ENCODE measurements at regions of chr7 and their contacts with region 1.

Region 1: DNA sequence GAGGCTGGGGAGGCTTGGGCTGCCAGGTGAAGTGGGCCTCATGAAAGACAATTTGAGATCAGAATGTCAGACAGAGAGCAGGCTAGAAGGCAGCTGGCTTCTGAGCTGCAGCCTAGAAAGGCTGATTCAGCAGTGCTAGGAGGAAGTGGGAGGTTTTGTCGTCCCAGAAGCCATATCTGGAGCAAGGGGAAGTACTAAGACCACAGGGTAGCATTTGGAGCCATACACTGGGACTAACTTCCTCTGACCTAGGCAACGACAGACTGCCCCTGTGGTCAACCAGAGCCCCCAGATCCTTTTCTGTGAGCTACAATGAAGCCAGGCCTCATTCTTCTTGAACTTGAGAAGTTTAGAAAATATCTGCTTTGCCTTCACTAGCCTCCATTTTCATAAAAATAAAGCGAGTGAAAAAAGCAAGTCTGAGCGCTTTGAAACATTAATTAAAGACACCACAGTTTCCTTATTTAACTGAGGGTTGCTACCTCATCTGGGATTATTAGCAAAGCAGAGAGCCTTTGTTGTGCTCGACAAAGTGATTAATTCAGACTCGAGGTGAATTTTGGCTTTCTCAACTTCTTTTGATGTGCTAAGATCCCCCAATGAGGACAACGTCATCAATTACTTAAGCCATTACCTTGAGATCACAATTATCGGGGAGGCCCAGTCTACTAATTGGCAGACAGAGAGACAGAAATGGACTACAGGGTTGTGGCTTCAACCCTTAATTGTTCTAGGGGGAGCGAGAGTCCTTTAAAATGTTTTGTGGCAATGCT is 26.6 kb downstream of the TBXAS1 start:
- DNase-seq: peak; percentile 84 to 96 (median 94)
- H3K4me3 ChIP-seq: peak overlapping the region in 1 of 3 experiments; percentile 56
- H3K4me3 Mint-ChIP-seq: peak overlapping the region in 1 of 2 donors; percentile 83
- H3K27ac ChIP-seq: peak overlapping the region; percentile 91 to 95
- H3K27ac Mint-ChIP-seq: peak overlapping the region; percentile 95 to 100 (median 99)
- H3K4me1 ChIP-seq: peaks cover 87 to 89% of the 10 kb centered on the region in 2 donors
- H3K4me1 Mint-ChIP-seq: peaks cover 80% of the 10 kb centered on the region
- H3K27me3 ChIP-seq: no peaks in the 10 kb centered on the region
- H3K27me3 Mint-ChIP-seq: peaks cover 0 to 4% (median 0%) of the 10 kb centered on the region in 3 donors
- CTCF ChIP-seq: no peak

Region 2: DNA sequence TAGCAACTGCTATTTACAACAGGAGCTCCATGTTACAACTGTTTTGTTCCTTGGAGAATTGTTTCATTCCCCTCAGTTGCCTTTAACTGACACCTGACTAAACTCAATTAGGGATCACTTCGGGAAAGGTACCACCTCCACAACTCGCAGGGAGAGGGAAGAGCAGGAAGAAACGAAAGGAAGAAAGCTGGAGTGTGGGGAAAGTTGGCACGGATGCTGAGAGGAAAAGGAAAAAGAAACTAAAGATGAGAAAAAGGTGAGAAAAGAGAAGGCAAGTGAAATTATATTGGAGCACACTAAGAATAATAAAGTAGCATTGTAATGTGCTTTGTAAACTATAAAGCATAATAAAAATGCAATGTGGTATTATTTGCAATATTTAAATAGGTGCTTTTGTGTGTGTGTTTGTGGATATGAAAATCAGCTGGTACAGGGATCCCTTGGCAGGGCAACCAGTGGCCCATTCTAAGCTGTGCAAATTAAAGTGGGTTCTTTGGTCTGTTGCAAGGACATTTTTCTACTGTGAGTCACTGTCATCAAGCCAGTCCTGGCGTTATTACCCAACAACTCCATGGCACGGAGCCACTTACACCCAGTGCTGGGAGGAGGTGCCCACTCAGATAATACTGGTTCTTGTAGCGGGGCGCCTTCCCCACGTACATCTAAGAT is 123.7 kb before region 1 on chr7:
- intact Hi-C with region 1: no loop called
- DNase-seq: peak; percentile 93 to 97 (median 94)
- H3K4me3 ChIP-seq: peak overlapping the region in 1 of 3 experiments; percentile 38
- H3K4me3 Mint-ChIP-seq: peak overlapping the region; percentile 63 to 72
- H3K27ac ChIP-seq: peak overlapping the region; percentile 88 to 93
- H3K27ac Mint-ChIP-seq: peak overlapping the region; percentile 89 to 100 (median 99)
- H3K4me1 ChIP-seq: peaks cover 64 to 81% of the 10 kb centered on the region in 2 donors
- H3K4me1 Mint-ChIP-seq: peaks cover 81% of the 10 kb centered on the region
- H3K27me3 ChIP-seq: no peaks in the 10 kb centered on the region
- H3K27me3 Mint-ChIP-seq: peaks cover 0 to 3% (median 0%) of the 10 kb centered on the region in 3 donors
- CTCF ChIP-seq: no peak

Region 3: DNA sequence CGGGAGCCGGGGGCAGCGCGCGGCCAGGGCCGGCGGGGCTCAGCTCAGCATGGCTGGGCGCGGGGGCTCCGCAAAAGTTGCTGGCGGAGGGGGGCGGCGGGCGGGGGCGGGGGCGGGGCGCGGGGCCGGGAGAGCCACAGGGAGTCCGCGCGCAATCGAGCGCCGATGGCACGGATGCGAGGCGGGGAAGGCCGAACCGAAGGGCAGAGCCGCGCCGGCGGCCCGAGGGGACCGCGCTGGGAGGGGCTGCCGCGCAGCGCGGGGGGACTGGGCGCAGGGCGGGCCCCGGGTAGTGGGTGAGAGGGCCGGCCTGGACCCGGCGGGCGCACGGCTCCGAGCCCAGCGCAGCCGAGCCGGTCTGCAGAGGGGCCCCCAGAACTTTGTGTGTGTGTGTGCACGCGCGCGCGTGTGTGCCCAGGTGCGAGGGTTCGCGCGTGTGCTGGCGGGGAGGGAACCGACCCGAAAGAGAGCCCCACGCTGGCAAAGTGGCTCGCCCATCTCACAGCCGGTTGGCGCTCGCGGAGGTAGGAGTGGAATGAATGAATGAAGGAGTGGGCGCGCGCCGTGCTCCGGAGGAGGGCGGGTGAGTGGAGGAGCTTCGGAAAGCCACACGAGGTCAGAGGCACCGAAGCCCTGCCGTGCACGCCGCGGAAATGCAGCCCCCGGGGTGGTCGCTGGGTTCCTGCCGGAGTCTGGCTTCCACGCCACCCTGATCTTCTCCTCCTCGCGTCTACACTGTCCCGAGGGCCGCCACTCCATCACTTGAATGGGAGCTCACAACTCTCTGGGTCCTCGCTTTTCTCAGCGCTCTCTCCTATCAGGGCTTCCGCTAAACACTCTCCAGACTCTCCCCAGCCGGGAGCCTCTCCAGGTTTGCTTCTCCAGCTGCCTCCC is 77.5 kb before region 1 on chr7 and contains the start of gene HIPK2:
- intact Hi-C with region 1: loop called in 1 of 2 experiments (anchors 5 kb)
- DNase-seq: peak; percentile 32 to 46 (median 42)
- H3K4me3 ChIP-seq: peak within 1 kb of the TSS; percentile 77 to 90 (median 89)
- H3K4me3 Mint-ChIP-seq: peak within 1 kb of the TSS; percentile 99 to 100
- H3K27ac ChIP-seq: peak within 1 kb of the TSS; percentile 86 to 94
- H3K27ac Mint-ChIP-seq: peak within 1 kb of the TSS; percentile 90 to 99 (median 97)
- H3K4me1 ChIP-seq: peaks cover 30 to 38% of the 10 kb centered on the region in 2 donors
- H3K4me1 Mint-ChIP-seq: peaks cover 37% of the 10 kb centered on the region
- H3K27me3 ChIP-seq: peaks cover 12 to 15% of the 10 kb centered on the region in 2 donors
- H3K27me3 Mint-ChIP-seq: peaks cover 19 to 22% (median 21%) of the 10 kb centered on the region in 3 donors
- CTCF ChIP-seq: no peak
- polyA plus RNA-seq, gene HIPK2: 1.6 to 12.1 (median 3.0) TPM

Region 4: DNA sequence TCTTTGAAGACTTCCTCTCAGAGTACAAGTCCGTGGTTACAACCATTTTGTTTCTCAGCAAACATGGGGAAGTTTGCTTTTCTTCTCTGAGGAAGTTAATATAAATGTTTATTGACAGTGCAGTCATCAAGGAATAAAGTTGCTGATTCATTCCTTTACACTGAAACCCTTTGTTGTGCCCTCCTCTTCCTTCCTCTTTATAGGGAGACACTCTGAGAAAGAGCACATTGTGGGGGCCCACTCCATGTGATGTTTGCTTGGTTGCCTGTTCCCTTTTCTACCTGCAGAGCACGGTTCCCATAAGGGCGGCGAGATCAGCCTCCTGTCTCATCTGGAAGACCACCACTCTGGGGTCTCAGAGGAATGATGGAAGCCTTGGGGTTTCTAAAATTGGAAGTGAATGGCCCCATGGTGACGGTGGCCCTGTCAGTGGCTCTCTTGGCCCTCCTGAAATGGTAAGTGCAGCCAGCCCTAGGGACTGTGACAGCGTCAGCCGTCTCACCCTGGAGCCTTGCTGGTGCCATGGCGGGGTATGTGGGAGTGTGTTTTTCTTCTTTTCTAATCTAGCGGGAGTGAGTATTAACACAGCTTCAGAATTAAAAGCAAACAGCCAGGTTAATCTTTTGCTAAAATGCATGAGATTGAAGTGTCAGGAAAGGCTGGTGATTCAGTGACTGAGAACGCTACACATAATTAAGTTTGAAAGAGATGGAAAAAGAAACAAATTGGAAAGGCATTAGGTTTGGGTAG is 26.5 kb before region 1 on chr7 and contains the start of gene TBXAS1:
- intact Hi-C with region 1: loop called in 1 of 2 experiments (anchors 2 kb)
- DNase-seq: peak; percentile 84 to 96 (median 91)
- H3K4me3 ChIP-seq: peak within 1 kb of the TSS; percentile 64 to 98 (median 86)
- H3K4me3 Mint-ChIP-seq: peak within 1 kb of the TSS; percentile 90 to 99
- H3K27ac ChIP-seq: peak within 1 kb of the TSS; percentile 90 to 94
- H3K27ac Mint-ChIP-seq: peak within 1 kb of the TSS; percentile 95 to 99 (median 97)
- H3K4me1 ChIP-seq: peaks cover 34 to 46% of the 10 kb centered on the region in 2 donors
- H3K4me1 Mint-ChIP-seq: peaks cover 45% of the 10 kb centered on the region
- H3K27me3 ChIP-seq: no peaks in the 10 kb centered on the region
- H3K27me3 Mint-ChIP-seq: peaks cover 0 to 6% (median 2%) of the 10 kb centered on the region in 3 donors
- CTCF ChIP-seq: no peak
- polyA plus RNA-seq, gene TBXAS1: 289 to 335 (median 298) TPM

Region 5: GRCh38 chr7:139901056-139901795 is 45.5 kb after region 1 on chr7:
- intact Hi-C with region 1: loop called in 1 of 2 experiments (anchors 5 kb)
- DNase-seq: peak; percentile 61 to 88 (median 86)
- H3K4me3 ChIP-seq: peak overlapping the region in 2 of 3 experiments; percentile 19 to 50
- H3K4me3 Mint-ChIP-seq: peak overlapping the region; percentile 54 to 60
- H3K27ac ChIP-seq: peak overlapping the region; percentile 97 to 99
- H3K27ac Mint-ChIP-seq: peak overlapping the region; percentile 90 to 97 (median 95)
- H3K4me1 ChIP-seq: peaks cover 63 to 68% of the 10 kb centered on the region in 2 donors
- H3K4me1 Mint-ChIP-seq: peaks cover 76% of the 10 kb centered on the region
- H3K27me3 ChIP-seq: no peaks in the 10 kb centered on the region
- H3K27me3 Mint-ChIP-seq: peaks cover 0 to 6% (median 0%) of the 10 kb centered on the region in 3 donors
- CTCF ChIP-seq: no peak

Region 6: GRCh38 chr7:139915864-139916716 is 60.4 kb after region 1 on chr7:
- intact Hi-C with region 1: loop called in 1 of 2 experiments (anchors 5 kb)
- DNase-seq: peak; percentile 84 to 95 (median 88)
- H3K4me3 ChIP-seq: no peak overlapping the region
- H3K4me3 Mint-ChIP-seq: no peak overlapping the region
- H3K27ac ChIP-seq: peak overlapping the region; percentile 50 to 80
- H3K27ac Mint-ChIP-seq: peak overlapping the region; percentile 71 to 94 (median 87)
- H3K4me1 ChIP-seq: peaks cover 18 to 23% of the 10 kb centered on the region in 2 donors
- H3K4me1 Mint-ChIP-seq: peaks cover 29% of the 10 kb centered on the region
- H3K27me3 ChIP-seq: no peaks in the 10 kb centered on the region
- H3K27me3 Mint-ChIP-seq: peaks cover 0 to 2% (median 0%) of the 10 kb centered on the region in 3 donors
- CTCF ChIP-seq: no peak

Region 7: DNA sequence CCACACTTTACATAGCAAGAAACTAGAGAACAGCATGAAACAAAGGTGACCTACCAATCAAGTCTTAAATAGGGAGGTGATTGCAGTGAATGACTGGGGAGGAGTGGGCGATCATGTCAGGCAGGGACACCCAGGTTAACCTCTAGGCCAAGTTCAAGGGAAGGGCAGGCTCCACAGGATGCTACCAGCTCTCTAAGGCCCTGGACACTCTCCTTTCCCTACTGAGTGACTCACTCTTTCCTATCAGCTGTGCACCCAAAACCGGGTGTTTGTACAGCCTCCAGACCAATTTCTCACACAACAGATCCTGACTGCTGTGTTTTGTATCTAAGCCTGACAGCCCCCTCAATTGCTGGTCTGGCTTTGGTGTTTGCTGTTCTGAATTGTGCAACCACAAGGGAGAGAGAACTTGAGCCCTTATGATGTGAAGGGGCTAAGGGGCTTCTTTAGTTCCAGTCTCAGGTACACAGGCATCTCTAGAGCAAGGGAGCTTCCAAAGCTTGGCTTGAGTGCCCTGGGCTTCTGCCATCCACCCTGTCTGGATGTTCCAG is 81.2 kb after region 1 on chr7:
- intact Hi-C with region 1: no loop called
- DNase-seq: peak; percentile 16 to 43 (median 38)
- H3K4me3 ChIP-seq: peak overlapping the region in 1 of 3 experiments; percentile 10
- H3K4me3 Mint-ChIP-seq: no peak overlapping the region
- H3K27ac ChIP-seq: peak overlapping the region in 1 of 2 donors; percentile 11
- H3K27ac Mint-ChIP-seq: peak overlapping the region; percentile 13 to 86 (median 71)
- H3K4me1 ChIP-seq: peaks cover 24 to 25% of the 10 kb centered on the region in 2 donors
- H3K4me1 Mint-ChIP-seq: peaks cover 46% of the 10 kb centered on the region
- H3K27me3 ChIP-seq: no peaks in the 10 kb centered on the region
- H3K27me3 Mint-ChIP-seq: peaks cover 0 to 1% (median 0%) of the 10 kb centered on the region in 3 donors
- CTCF ChIP-seq: no peak